PC-9 (cell line): ENCODE measurements at regions of chr5 and their contacts with region 1.

Region 1: DNA sequence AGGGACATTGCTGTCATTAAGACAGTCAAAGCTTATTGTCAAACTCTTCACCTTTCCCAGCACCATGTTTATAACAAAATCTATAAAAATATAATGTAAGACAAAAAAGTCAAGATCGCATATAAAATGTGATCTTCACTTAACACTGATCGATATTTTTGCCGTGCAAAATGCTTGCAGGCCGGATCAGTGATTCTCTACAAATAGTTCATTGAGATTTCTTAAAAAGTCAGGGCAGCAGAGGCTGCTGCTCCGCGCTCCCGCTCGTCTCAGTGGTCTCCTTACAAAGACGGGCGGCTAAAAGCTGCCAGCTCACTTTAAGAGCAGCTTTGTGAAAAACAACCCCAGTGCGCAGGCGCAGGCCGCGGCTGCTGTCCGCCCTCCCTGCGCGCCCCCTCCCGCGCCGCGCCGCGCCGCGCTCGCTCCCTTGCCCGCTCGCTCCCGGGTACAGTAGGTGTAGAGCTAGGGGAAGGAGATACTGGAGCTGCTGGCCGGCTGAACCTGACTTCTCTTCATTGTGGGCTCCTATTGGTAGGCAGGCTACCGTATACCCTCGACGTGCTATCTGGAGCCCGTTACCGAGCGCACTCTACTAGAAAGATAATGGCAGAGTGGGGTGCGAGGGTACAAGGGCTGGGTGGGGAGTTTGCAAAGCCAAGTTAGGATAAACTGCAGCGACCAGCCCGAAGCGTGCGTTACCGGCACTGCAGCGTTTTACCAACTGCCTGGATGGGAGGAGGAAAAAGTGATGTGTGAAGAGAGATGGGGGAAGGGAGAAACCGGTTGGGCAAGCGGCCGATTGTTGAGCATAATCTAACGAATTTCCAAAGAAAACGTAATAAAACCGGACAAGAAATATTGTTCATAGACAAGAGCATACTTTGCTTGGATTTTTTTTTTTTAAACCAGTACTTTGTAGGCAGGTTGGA is at the start of gene ARRDC3:
- DNase-seq: peak; percentile 83 to 97
- H3K4me3 ChIP-seq: peak within 1 kb of the TSS; percentile 98
- H3K27ac ChIP-seq: peak within 1 kb of the TSS; percentile 98
- H3K4me1 ChIP-seq: peaks cover 14% of the 10 kb centered on the region
- H3K27me3 ChIP-seq: no peaks in the 10 kb centered on the region
- CTCF ChIP-seq: 0 out of 2 replicates have a peak, but pooled peaks have one; percentile 29
- total RNA-seq, gene ARRDC3: 25.0 and 32.0 TPM in 2 replicates

Region 2: DNA sequence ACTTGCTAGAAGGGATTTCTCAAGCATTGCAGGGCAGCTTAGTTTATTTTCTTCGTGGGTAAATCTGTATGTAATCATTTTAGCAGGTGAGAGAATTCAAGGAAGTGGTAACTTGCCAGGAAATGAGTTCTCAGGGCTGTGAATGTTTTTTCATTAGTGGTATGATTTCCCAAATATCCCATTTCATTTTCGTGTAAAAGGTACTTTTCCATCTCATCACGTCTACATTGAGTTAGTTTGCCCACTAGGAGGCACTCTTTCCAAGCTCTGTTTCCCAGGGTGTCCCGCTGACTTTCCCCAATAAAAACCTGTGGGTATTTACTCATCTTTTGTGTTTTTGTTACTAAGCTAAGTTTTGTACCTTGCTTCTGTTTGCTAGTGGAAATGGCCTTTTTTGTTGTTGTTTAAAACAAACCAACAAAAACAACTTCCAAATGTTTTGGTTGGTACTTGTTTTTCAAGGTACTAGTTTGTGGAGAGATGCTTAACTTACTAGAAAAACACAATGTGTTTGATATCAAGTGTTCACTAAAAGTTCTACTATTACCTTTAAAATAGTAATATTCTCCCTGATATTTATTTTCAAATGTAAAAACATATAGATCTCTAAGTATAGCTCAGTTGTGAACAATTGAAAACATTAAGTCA is 451.1 kb before region 1 on chr5:
- CTCF ChIA-PET with region 1: interaction called, 8 read pairs
- POLR2A ChIA-PET with region 1: no interaction called
- intact Hi-C with region 1: loop called (anchors 1 kb)
- DNase-seq: peak; percentile 34 to 52
- H3K4me3 ChIP-seq: no peak overlapping the region
- H3K27ac ChIP-seq: peak overlapping the region; percentile 45
- H3K4me1 ChIP-seq: peaks cover 8% of the 10 kb centered on the region
- H3K27me3 ChIP-seq: no peaks in the 10 kb centered on the region
- CTCF ChIP-seq: peak; percentile 73

Region 3: DNA sequence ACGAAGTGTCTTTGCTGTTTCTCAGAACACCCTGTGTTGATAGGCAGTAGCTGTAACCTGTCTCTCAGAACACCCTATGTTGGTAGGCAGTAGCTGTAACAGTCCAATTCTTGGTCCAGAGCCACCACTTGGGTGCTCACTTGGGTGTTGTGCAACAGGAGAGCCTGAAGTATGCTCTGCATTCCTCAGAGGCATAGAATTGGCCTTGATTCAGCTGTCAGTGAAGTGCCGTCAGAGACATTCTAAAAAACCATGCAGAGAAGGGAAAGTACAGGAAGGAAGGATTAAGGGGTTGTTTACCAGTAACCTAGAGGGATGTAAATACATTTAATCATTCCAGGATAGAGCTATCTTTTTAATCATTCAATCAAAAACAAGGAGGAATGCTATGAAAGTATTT is 231.3 kb before region 1 on chr5:
- CTCF ChIA-PET with region 1: no interaction called
- POLR2A ChIA-PET with region 1: interaction called, 10 read pairs
- intact Hi-C with region 1: no loop called
- DNase-seq: peak; percentile 62 to 84
- H3K4me3 ChIP-seq: no peak overlapping the region
- H3K27ac ChIP-seq: no peak overlapping the region
- H3K4me1 ChIP-seq: peaks cover 25% of the 10 kb centered on the region
- H3K27me3 ChIP-seq: no peaks in the 10 kb centered on the region
- CTCF ChIP-seq: no peak

Region 4: GRCh38 chr5:91176288-91177016 is 206.8 kb before region 1 on chr5:
- CTCF ChIA-PET with region 1: no interaction called
- POLR2A ChIA-PET with region 1: no interaction called
- intact Hi-C with region 1: no loop called
- DNase-seq: no peak
- H3K4me3 ChIP-seq: no peak overlapping the region
- H3K27ac ChIP-seq: no peak overlapping the region
- H3K4me1 ChIP-seq: no peaks in the 10 kb centered on the region
- H3K27me3 ChIP-seq: no peaks in the 10 kb centered on the region
- CTCF ChIP-seq: no peak

Region 5: DNA sequence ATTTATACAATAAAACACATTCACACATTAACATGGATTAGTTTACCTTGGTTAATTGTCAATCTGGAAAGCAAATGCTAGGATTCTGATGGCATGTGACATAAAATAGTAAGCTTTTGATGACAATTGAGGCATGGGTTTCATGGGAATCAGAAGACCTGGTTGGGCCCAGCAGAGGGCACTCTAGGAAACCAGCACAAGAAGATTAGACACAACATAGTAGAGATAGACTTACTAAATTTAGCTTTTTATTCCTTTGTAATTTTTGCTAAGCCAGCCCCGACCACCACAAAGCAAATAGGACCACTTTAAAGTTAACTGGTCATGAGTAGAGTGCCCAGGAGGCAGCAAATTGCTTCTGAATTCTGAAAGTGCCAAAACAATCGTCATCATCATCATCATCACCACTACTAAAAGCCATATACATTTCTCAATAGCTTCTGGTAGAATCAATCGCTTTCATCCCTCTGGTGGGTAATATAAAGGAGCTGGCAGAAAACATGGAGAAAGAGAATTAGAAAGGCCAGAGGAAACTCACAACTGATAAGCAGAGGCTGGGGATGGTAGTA is 163.4 kb before region 1 on chr5:
- CTCF ChIA-PET with region 1: interaction called, 14 read pairs
- POLR2A ChIA-PET with region 1: interaction called, 4 read pairs
- intact Hi-C with region 1: loop called (anchors 2 kb)
- DNase-seq: no peak
- H3K4me3 ChIP-seq: no peak overlapping the region
- H3K27ac ChIP-seq: peak overlapping the region; percentile 62
- H3K4me1 ChIP-seq: peaks cover 23% of the 10 kb centered on the region
- H3K27me3 ChIP-seq: no peaks in the 10 kb centered on the region
- CTCF ChIP-seq: peak; percentile 52

Region 6: GRCh38 chr5:91280362-91281269 is 102.7 kb before region 1 on chr5:
- CTCF ChIA-PET with region 1: no interaction called
- POLR2A ChIA-PET with region 1: interaction called, 11 read pairs
- intact Hi-C with region 1: loop called (anchors 1 kb)
- DNase-seq: peak; percentile 94
- H3K4me3 ChIP-seq: peak overlapping the region; percentile 70
- H3K27ac ChIP-seq: peak overlapping the region; percentile 97
- H3K4me1 ChIP-seq: peaks cover 60% of the 10 kb centered on the region
- H3K27me3 ChIP-seq: no peaks in the 10 kb centered on the region
- CTCF ChIP-seq: 0 out of 2 replicates have a peak, but pooled peaks have one; percentile 22

Region 7: DNA sequence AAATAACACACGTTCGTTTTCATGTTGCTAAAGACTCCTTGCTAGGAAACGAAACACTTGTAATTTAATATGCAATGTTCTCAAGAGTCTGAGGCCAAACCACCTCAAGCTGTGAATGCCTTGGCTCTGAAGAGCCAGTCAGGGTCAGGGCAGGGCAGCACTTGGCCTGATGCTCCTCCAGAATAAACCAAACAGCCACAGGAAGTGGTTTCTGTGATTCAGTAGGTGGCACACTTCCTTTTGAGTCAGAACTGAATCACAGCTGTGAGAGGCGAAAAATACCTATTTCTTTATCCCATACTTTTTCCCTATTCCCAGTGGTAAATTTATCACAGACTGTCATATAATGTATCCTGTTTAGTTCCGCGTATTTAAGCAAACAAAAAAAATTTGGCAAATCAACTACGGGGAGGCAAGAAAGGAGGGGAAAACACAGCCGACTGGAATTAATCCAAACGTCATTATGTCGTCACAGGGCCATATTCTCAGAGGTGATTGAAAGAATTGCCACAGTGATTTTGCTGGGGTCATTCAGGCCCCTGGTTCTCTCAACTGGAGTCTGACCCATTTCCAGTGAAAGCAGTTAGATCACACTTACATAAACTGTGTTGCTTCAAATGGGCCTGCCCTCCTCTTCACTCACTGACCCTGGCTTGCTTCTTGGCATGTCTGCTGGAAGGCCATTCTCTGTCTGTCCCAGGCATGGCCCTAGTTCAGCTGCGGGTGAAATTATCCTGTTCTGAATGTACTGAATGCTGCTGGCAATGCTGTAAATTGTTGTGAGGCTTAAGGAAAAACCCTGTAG is 71.4 kb before region 1 on chr5:
- CTCF ChIA-PET with region 1: no interaction called
- POLR2A ChIA-PET with region 1: interaction called, 86 read pairs
- intact Hi-C with region 1: loop called (anchors 1 kb)
- DNase-seq: peak; percentile 78 to 98
- H3K4me3 ChIP-seq: peak overlapping the region; percentile 82
- H3K27ac ChIP-seq: peak overlapping the region; percentile 99
- H3K4me1 ChIP-seq: peaks cover 38% of the 10 kb centered on the region
- H3K27me3 ChIP-seq: no peaks in the 10 kb centered on the region
- CTCF ChIP-seq: no peak; the same call in 1 of the 2 replicates

Region 8: DNA sequence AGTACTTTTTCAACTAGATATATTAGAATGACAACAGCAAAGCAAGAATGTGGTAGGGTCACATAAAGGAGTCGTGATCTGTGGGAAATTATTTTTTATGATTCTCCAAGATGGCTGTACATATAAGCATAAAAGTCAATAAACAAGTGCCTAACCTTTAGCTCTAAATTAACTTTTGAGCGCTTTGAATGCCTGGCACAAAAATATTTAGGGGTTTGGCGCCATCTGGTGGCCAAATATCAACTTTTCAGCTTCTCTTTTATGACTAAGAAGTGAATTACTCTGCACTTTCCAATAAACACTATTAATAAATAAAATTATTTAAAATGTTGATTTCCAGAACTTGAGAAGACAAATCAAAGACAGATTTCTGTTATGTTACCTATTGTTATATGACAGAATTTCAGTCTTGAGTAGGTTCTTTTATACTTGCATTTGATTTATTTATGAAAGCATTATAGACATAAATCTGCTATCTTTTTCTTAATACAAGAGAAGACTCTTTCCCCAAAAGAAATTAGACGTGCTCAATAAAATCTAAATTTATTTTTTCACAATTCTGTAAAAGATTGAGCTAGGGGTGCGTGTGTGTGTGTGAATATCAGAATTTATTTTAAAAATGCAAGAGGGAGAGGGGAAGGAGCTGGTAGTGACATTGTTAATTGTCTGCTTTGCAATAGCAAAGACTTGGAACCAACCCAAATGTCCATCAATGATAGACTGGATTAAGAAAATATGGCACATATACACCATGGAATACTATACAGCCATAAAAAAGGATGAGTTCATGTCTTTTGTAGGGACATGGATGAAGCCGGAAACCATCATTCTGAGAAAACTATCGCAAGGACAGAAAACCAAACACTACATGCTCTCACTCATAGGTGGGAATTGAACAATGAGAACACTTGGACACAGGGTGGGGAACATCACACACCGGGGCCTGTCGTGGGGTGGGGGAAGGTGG is 36.6 kb after region 1 on chr5:
- CTCF ChIA-PET with region 1: interaction called, 23 read pairs
- POLR2A ChIA-PET with region 1: interaction called, 3 read pairs
- intact Hi-C with region 1: loop called (anchors 1 kb)
- DNase-seq: peak; percentile 53 to 68
- H3K4me3 ChIP-seq: no peak overlapping the region
- H3K27ac ChIP-seq: no peak overlapping the region
- H3K4me1 ChIP-seq: no peaks in the 10 kb centered on the region
- H3K27me3 ChIP-seq: no peaks in the 10 kb centered on the region
- CTCF ChIP-seq: peak; percentile 87